ENCODE measurements at regions of chr12 and their contacts with region 1.

Region 1: GRCh38 chr12:6890789-6891645 is 13.6 kb upstream of the LRRC23 start:
- DNase-seq: peak; percentile 47
- H3K4me3 ChIP-seq: peak overlapping the region; percentile 57
- CTCF ChIP-seq: peak; percentile 78

Region 2: DNA sequence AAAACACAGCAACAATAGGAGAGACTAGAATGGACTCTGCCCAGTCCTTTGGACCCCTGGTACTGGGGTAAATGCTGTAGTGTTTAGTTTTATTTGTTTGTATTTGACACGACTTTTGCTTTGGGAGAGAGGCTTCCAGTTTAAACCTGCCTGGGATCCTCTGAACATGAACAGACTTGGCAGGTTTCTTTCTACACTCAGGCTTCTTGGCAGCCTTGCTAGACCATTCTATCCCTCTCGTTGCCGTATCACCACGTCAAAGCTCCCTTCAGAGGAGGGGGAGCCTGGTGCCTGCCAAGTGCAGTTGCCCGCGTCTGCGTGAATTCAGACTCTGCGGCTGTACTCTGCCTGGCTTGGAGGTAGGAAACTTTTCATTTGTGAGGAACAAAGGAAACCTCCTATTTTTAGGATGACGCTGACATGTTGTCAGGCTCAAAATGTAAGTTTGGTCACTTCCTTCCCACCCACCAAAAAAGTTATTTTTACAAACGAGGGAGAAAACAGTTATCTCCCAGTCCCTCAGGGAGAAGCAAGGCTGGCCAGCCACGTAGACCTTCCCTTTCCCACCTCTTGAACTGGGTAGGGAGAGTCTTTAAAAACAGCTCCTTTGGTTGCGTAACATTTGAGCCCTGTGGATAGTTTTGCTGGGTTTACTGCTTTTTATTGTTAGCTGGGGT is 664.9 kb before region 1 on chr12:
- CTCF ChIA-PET with region 1: no interaction called
- POLR2A ChIA-PET with region 1: no interaction called
- DNase-seq: no peak
- H3K4me3 ChIP-seq: no peak overlapping the region
- CTCF ChIP-seq: no peak

Region 3: GRCh38 chr12:6904280-6905278 is 13.6 kb after region 1 on chr12 and contains the start of gene LRRC23:
- CTCF ChIA-PET with region 1: interaction called, 53 read pairs
- POLR2A ChIA-PET with region 1: interaction called, 6 read pairs
- DNase-seq: peak; percentile 55
- H3K4me3 ChIP-seq: peak within 1 kb of the TSS; percentile 92
- CTCF ChIP-seq: no peak

Region 4: DNA sequence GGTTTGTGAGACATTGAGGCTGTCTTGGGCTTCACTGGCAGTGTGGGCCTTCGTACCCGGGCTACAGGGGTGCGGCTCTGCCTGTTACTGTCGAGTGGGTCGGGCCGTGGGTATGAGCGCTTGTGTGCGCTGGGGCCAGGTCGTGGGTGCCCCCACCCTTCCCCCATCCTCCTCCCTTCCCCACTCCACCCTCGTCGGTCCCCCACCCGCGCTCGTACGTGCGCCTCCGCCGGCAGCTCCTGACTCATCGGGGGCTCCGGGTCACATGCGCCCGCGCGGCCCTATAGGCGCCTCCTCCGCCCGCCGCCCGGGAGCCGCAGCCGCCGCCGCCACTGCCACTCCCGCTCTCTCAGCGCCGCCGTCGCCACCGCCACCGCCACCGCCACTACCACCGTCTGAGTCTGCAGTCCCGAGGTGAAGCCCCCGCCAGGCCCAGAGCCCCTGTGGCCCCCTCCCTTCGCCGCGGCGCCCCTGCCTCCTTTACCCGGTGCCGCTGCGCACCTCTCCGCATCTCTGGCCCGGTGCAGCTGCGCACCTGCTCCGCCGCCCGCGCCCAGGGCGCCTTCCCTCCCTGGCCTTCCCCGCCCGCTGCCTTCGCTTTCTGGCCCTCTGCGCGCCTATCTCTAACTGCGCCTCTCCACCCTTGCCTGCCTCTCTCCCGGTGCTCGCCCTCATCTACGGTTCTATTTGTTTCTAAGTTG is 23.4 kb after region 1 on chr12 and contains the start of gene ENO2:
- CTCF ChIA-PET with region 1: interaction called, 14 read pairs
- POLR2A ChIA-PET with region 1: no interaction called
- DNase-seq: no peak
- H3K4me3 ChIP-seq: peak within 1 kb of the TSS; percentile 69
- CTCF ChIP-seq: no peak

Measured in AG04449 (cell line).